ENCODE measurements at regions of chr5 and their contacts with region 1.

Region 1: GRCh38 chr5:127875235-127876021 is 172.2 kb downstream of the CCDC192 start:
- DNase-seq: peak; percentile 36 to 79
- ATAC-seq: peak; percentile 90 to 93
- H3K4me3 ChIP-seq: peak overlapping the region in 2 of 4 donors; percentile 6 to 11
- H3K27ac ChIP-seq: peak overlapping the region; percentile 75 to 80 (median 78)
- H3K4me1 ChIP-seq: peaks cover 39 to 41% of the 10 kb centered on the region in 2 donors
- H3K27me3 ChIP-seq: no peaks in the 10 kb centered on the region
- CTCF ChIP-seq: peak in 2 of 5 experiments; percentile 21 to 27
- POLR2A ChIP-seq: no peak

Region 2: DNA sequence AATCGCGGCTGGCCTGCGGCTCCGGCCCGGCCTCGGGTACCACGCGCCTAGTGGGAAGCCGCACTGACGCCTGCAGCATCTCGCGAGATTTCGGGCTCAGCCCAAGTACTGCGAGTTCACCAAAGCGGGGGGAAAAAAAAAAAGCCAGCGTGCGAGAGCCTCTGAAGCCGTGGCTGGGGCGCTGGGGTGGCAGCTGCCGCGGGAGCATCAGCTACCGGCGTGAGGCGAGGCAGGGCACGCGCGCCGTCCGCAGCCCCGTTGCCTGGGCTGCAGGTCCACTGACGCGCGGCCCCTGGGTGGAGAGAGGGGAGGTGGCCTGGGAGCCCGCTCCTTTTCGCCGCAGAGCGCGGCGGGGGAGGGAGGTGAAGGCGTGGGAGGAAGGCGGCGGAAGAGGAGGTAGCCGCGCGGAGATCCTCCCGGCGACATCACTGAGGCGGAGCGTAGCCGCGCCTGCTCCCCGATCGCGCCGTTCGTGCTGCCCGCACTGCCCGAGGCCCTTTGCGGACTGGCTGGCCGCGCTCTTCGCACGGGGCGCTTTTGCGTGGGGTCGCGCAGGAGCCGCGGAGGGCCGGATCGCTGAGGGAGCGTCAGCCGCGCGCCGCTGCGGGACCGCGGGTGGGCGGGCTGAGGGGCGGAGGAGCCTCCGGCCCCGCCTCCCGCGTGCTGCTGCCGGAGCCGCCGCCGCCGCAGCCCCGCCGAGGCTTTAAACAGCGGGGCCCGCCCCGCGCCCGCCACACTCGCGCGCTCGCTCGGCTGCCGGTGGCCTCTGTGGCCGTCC is 207.8 kb after region 1 on chr5 and contains the start of gene SLC12A2:
- in situ Hi-C with region 1: no loop called
- intact Hi-C with region 1: loop called (anchors 2 kb)
- DNase-seq: peak; percentile 90 to 91
- ATAC-seq: peak; percentile 80 to 81
- H3K4me3 ChIP-seq: peak within 1 kb of the TSS; percentile 79 to 88 (median 84)
- H3K27ac ChIP-seq: peak within 1 kb of the TSS; percentile 93 to 99 (median 99)
- H3K4me1 ChIP-seq: peaks cover 40 to 61% of the 10 kb centered on the region in 2 donors
- H3K27me3 ChIP-seq: no peaks in the 10 kb centered on the region
- CTCF ChIP-seq: peak in 1 of 5 experiments; percentile 8
- POLR2A ChIP-seq: peak; percentile 88 to 97
- total RNA-seq, gene SLC12A2: 11.6 to 21.0 (median 17.2) TPM

Region 3: DNA sequence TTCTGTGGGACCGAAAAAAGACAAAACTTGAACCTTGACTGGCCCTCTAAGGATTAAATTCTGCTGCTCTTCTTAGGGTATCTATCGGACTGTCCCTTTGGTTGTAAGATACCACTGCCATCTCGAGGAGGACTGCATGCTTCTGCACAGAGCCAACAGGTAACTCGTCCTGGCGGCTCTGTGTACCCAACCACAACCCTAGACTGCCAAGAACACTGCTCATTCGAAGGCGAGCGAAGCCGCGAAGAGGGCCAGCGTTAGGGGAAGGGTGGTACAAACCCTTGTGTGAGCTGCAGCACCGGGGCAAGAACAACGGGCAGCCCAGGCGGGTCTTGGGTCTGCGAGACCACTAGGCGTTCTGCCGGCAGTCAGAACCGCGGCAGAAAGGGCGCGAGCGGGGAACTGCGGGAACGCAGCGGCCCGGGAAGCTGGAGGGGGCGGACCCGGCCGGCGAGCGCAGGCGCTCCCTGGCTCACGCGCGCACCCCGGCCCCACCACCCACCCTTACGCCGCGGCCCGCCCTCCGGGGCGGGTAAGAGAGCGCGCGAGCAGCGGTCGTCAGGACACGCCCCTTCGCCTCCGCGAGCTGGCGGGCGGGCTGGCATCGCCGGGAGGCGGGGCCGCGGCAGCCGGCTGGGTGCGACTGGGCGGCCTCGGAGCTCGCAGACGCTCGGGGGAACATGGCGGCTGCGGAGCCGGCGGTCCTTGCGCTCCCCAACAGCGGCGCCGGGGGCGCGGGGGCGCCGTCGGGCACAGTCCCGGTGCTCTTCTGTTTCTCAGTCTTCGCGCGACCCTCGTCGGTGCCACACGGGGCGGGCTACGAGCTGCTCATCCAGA is 1218.9 kb after region 1 on chr5 and contains the start of gene ISOC1:
- in situ Hi-C with region 1: no loop called
- intact Hi-C with region 1: loop called (anchors 10 kb)
- DNase-seq: peak; percentile 68 to 79
- ATAC-seq: peak; percentile 83 to 85
- H3K4me3 ChIP-seq: peak within 1 kb of the TSS; percentile 77 to 95 (median 88)
- H3K27ac ChIP-seq: peak within 1 kb of the TSS; percentile 84 to 89 (median 85)
- H3K4me1 ChIP-seq: peaks cover 31 to 37% of the 10 kb centered on the region in 2 donors
- H3K27me3 ChIP-seq: no peaks in the 10 kb centered on the region
- CTCF ChIP-seq: no peak
- POLR2A ChIP-seq: peak; percentile 80 to 90
- total RNA-seq, gene ISOC1: 11.0 to 14.0 (median 12.9) TPM